PC-3 (cell line): ENCODE measurements at regions of chr7 and their contacts with region 1.

Region 1: GRCh38 chr7:13990984-13991790 is 1.7 kb upstream of the ETV1 start:
- DNase-seq: peak; percentile 98
- ATAC-seq: peak; percentile 74
- H3K4me3 ChIP-seq: peak overlapping the region; percentile 77
- H3K27ac ChIP-seq: peak overlapping the region; percentile 82
- H3K4me1 ChIP-seq: peaks cover 26% of the 10 kb centered on the region
- H3K27me3 ChIP-seq: no peaks in the 10 kb centered on the region
- CTCF ChIP-seq: no peak

Region 2: DNA sequence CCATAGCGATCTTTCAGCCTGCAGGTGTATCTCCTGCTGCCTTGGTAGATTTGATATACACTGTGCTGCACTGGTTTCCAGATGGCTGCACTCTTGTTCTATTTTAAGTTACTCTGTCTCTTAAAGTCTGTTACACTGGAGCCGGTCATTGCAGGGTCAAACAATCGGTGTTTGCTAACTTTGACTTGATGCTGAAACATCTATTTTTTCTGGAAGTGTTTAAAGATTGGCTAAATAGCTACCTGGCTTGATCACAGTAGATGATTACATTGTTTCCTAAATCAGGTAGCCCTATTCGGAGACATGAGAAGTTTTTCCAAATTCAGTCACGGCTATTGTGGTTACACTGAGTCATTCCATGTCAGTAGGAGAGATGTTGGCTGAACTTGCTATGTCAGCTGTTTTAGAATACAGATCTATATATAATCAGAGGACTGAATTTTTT is 576.5 kb before region 1 on chr7:
- CTCF ChIA-PET with region 1: no interaction called
- POLR2A ChIA-PET with region 1: no interaction called
- intact Hi-C with region 1: loop called (anchors 10 kb)
- DNase-seq: peak; percentile 92
- ATAC-seq: peak; percentile 97
- H3K4me3 ChIP-seq: peak overlapping the region; percentile 2; the same call in 1 of the 2 replicates
- H3K27ac ChIP-seq: 0 out of 2 replicates have a peak overlapping the region, but pooled peaks have one; percentile 4
- H3K4me1 ChIP-seq: peaks cover 17% of the 10 kb centered on the region
- H3K27me3 ChIP-seq: no peaks in the 10 kb centered on the region
- CTCF ChIP-seq: no peak

Region 3: DNA sequence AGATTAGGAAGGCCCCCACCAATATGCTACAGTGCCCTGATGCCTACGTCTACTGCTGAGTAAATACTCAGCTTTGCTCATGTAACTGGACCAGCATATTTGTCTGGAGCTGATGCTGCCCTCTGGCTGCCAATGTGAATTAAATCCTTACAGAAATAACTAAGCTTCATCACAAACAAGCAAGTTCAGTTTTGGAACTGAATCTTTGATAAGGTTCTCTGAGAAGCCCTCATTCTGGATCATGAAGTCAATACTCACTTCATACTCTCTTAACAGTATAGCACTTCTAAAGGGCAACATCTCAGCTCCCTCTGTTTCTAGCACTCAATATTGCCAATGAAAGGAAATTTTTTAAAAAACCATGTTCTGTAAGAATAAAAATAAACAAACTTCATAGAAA is 248.4 kb before region 1 on chr7:
- CTCF ChIA-PET with region 1: interaction called, 3 read pairs
- POLR2A ChIA-PET with region 1: interaction called, 5 read pairs
- intact Hi-C with region 1: loop called (anchors 5 kb)
- DNase-seq: peak; percentile 69
- ATAC-seq: peak; percentile 73
- H3K4me3 ChIP-seq: no peak overlapping the region
- H3K27ac ChIP-seq: peak overlapping the region; percentile 56
- H3K4me1 ChIP-seq: peaks cover 24% of the 10 kb centered on the region
- H3K27me3 ChIP-seq: no peaks in the 10 kb centered on the region
- CTCF ChIP-seq: peak; percentile 78

Region 4: DNA sequence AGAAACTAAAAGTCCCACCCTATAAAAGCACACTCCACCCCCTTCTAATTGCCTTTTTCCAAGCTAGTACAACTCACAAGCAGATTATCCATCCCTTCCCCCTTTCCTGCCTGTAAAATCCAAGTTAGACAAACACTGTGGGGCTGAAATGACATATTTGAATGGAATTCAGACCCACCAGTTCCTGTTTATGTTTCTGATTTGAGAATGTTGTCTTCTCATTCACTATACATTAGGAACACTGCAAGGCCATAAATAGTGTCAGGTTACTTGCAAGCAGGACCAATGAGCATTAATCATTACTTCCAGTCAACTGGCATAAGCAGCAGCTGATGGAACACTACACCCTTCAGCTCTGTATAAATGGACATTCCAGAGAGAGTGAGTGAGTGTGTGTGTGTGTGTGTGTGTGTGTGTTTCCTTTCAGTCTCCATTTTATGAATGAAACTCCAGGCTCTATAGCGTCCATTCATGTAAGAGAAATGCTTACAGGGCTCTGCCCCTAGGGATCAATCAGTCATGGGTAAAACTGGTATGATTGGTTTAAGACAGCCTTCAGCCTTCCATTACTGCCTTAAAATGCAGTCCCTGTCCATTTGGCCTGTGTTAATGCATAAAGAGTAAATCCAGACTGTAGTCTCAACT is 71.0 kb before region 1 on chr7:
- CTCF ChIA-PET with region 1: interaction called, 4 read pairs
- POLR2A ChIA-PET with region 1: interaction called, 9 read pairs
- intact Hi-C with region 1: loop called (anchors 1 kb)
- DNase-seq: peak; percentile 97
- ATAC-seq: peak; percentile 99
- H3K4me3 ChIP-seq: peak overlapping the region; percentile 57
- H3K27ac ChIP-seq: peak overlapping the region; percentile 93
- H3K4me1 ChIP-seq: peaks cover 21% of the 10 kb centered on the region
- H3K27me3 ChIP-seq: no peaks in the 10 kb centered on the region
- CTCF ChIP-seq: no peak

Region 5: DNA sequence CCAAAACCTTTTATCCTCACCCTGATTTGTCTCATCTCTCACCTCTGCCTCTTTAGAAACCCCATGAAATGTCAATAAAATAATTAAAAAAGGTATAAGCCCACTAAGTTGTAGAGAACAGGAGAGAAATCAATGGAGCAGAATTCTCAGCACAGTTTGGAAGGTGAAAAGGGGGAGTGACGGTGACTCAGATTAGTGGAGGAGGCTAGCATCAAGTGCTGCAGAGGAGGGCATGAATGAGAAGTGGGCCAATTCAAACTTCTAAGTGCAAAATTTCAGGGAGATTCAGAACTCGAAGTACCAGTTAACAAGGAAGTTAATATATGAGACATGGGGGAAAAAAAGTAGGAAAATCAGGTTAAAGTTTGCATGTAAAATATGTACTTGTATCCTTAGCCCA is 33.2 kb after region 1 on chr7:
- CTCF ChIA-PET with region 1: no interaction called
- POLR2A ChIA-PET with region 1: no interaction called
- intact Hi-C with region 1: no loop called
- DNase-seq: no peak
- ATAC-seq: no peak
- H3K4me3 ChIP-seq: no peak overlapping the region
- H3K27ac ChIP-seq: no peak overlapping the region
- H3K4me1 ChIP-seq: peaks cover 13% of the 10 kb centered on the region
- H3K27me3 ChIP-seq: no peaks in the 10 kb centered on the region
- CTCF ChIP-seq: no peak

Region 6: GRCh38 chr7:14144538-14144937 is 153.4 kb after region 1 on chr7:
- CTCF ChIA-PET with region 1: no interaction called
- POLR2A ChIA-PET with region 1: no interaction called
- intact Hi-C with region 1: loop called (anchors 5 kb)
- DNase-seq: no peak
- ATAC-seq: peak; percentile 18; the same call in 1 of the 2 replicates
- H3K4me3 ChIP-seq: no peak overlapping the region
- H3K27ac ChIP-seq: no peak overlapping the region
- H3K4me1 ChIP-seq: peaks cover 10% of the 10 kb centered on the region
- H3K27me3 ChIP-seq: no peaks in the 10 kb centered on the region
- CTCF ChIP-seq: no peak

Region 7: GRCh38 chr7:14457568-14458453 is 466.6 kb after region 1 on chr7:
- CTCF ChIA-PET with region 1: interaction called, 3 read pairs
- POLR2A ChIA-PET with region 1: interaction called, 3 read pairs
- intact Hi-C with region 1: loop called (anchors 1 kb)
- DNase-seq: peak; percentile 84
- ATAC-seq: peak; percentile 92
- H3K4me3 ChIP-seq: peak overlapping the region; percentile 60
- H3K27ac ChIP-seq: no peak overlapping the region
- H3K4me1 ChIP-seq: 0 out of 2 replicates have a peak, but pooled peaks cover 4% of the 10 kb centered on the region
- H3K27me3 ChIP-seq: no peaks in the 10 kb centered on the region
- CTCF ChIP-seq: peak; percentile 85